ENCODE measurements at regions of chr19 and their contacts with region 1.

Region 1: DNA sequence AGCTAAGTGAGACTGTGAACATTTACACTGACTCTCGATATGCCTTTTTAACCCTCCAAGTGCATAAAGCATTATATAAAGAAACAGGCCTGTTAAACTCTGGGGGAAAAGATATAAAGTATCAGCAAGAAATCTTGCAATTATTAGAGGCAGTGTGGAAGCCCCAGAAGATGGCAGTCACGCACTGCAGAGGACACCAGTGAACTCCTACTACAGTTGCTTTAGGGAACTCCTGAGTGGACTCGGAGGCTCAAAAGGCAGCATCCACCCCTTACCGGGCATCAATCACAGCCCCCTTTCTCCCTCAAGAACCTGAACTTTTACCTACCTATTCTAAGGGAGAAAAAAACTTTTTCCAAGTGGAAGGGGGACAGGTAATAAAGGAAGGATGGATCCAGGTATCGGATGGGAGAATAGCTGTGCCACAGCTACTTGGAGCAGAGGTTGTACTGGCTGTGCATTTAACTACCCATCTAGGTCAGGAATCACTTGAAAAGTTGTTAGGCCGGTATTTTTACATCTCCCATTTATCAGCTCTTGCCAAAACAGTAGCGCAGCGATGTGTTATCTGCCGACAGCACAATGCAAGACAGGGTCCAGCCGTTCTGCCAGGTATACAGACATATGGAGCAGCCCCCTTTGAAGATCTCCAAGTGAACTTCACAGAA is 80.1 kb downstream of the ZNF486 start:
- DNase-seq: peak; percentile 77
- H3K4me3 ChIP-seq: no peak overlapping the region
- H3K27ac ChIP-seq: no peak overlapping the region
- H3K4me1 ChIP-seq: peaks cover 12% of the 10 kb centered on the region
- CTCF ChIP-seq: peak; percentile 90

Region 2: GRCh38 chr19:19997656-19998268 is 249.4 kb before region 1 on chr19:
- CTCF ChIA-PET with region 1: no interaction called
- POLR2A ChIA-PET with region 1: no interaction called
- intact Hi-C with region 1: loop called (anchors 10 kb)
- DNase-seq: peak; percentile 56
- H3K4me3 ChIP-seq: no peak overlapping the region
- H3K27ac ChIP-seq: no peak overlapping the region
- H3K4me1 ChIP-seq: no peaks in the 10 kb centered on the region
- CTCF ChIP-seq: peak; percentile 86

Region 3: GRCh38 chr19:20233105-20233504 is 14.0 kb before region 1 on chr19:
- CTCF ChIA-PET with region 1: no interaction called
- POLR2A ChIA-PET with region 1: no interaction called
- intact Hi-C with region 1: no loop called
- DNase-seq: no peak
- H3K4me3 ChIP-seq: no peak overlapping the region
- H3K27ac ChIP-seq: no peak overlapping the region
- H3K4me1 ChIP-seq: peaks cover 18% of the 10 kb centered on the region
- CTCF ChIP-seq: no peak

Region 4: GRCh38 chr19:20359933-20360720 is 113.0 kb after region 1 on chr19:
- CTCF ChIA-PET with region 1: no interaction called
- POLR2A ChIA-PET with region 1: no interaction called
- intact Hi-C with region 1: loop called (anchors 1 kb)
- DNase-seq: peak; percentile 45
- H3K4me3 ChIP-seq: no peak overlapping the region
- H3K27ac ChIP-seq: no peak overlapping the region
- H3K4me1 ChIP-seq: no peaks in the 10 kb centered on the region
- CTCF ChIP-seq: peak; percentile 87